ENCODE measurements at regions of chr16 and their contacts with region 1.

Region 1: GRCh38 chr16:8797364-8798173 is at the starts of genes PMM2 and TMEM186:
- DNase-seq: peak; percentile 78 to 96 (median 93)
- ATAC-seq: peak; percentile 99
- H3K4me3 ChIP-seq: peak within 1 kb of the TSS; percentile 90
- H3K4me3 Mint-ChIP-seq: peak within 1 kb of the TSS; percentile 91 to 99 (median 96)
- H3K27ac ChIP-seq: peak within 1 kb of the TSS; percentile 86
- H3K27ac Mint-ChIP-seq: peak within 1 kb of the TSS; percentile 87 to 95 (median 92)
- H3K4me1 ChIP-seq: peaks cover 25 to 32% of the 10 kb centered on the region in 2 donors
- H3K4me1 Mint-ChIP-seq: peaks cover 19 to 71% (median 49%) of the 10 kb centered on the region in 7 donors
- H3K27me3 ChIP-seq: no peaks in the 10 kb centered on the region
- H3K27me3 Mint-ChIP-seq: no peaks in the 10 kb centered on the region
- total RNA-seq, gene PMM2: 32.2 to 52.8 (median 41.7) TPM
- total RNA-seq, gene TMEM186: 3.2 to 16.3 (median 11.3) TPM

Region 2: GRCh38 chr16:8621572-8622314 is 175.8 kb before region 1 on chr16 and contains the start of gene METTL22:
- CTCF ChIA-PET with region 1: no interaction called
- POLR2A ChIA-PET with region 1: interaction called, 3 read pairs
- intact Hi-C with region 1: loop called (anchors 1 kb)
- DNase-seq: peak; percentile 83 to 98 (median 90)
- ATAC-seq: peak; percentile 99
- H3K4me3 ChIP-seq: peak within 1 kb of the TSS; percentile 97
- H3K4me3 Mint-ChIP-seq: peak within 1 kb of the TSS; percentile 93 to 100 (median 95)
- H3K27ac ChIP-seq: peak within 1 kb of the TSS; percentile 92
- H3K27ac Mint-ChIP-seq: peak within 1 kb of the TSS; percentile 75 to 93 (median 87)
- H3K4me1 ChIP-seq: peaks cover 7 to 10% of the 10 kb centered on the region in 2 donors
- H3K4me1 Mint-ChIP-seq: peaks cover 17 to 40% (median 26%) of the 10 kb centered on the region in 7 donors
- H3K27me3 ChIP-seq: no peaks in the 10 kb centered on the region
- H3K27me3 Mint-ChIP-seq: peaks cover 0 to 17% (median 6%) of the 10 kb centered on the region in 5 donors
- total RNA-seq, gene METTL22: 28.9 to 59.4 (median 48.9) TPM

Region 3: GRCh38 chr16:8660841-8661301 is 136.7 kb before region 1 on chr16:
- CTCF ChIA-PET with region 1: no interaction called
- POLR2A ChIA-PET with region 1: no interaction called
- intact Hi-C with region 1: loop called in 1 of 2 experiments (anchors 1 kb)
- DNase-seq: peak in 8 of 9 donors; percentile 11 to 71 (median 28)
- ATAC-seq: peak; percentile 81
- H3K4me3 ChIP-seq: no peak overlapping the region
- H3K4me3 Mint-ChIP-seq: no peak overlapping the region
- H3K27ac ChIP-seq: no peak overlapping the region
- H3K27ac Mint-ChIP-seq: no peak overlapping the region
- H3K4me1 ChIP-seq: no peaks in the 10 kb centered on the region
- H3K4me1 Mint-ChIP-seq: peaks cover 0 to 3% (median 0%) of the 10 kb centered on the region in 7 donors
- H3K27me3 ChIP-seq: no peaks in the 10 kb centered on the region
- H3K27me3 Mint-ChIP-seq: no peaks in the 10 kb centered on the region

Region 4: GRCh38 chr16:8674413-8675022 is 123.1 kb before region 1 on chr16 and contains the start of gene ABAT:
- CTCF ChIA-PET with region 1: no interaction called
- POLR2A ChIA-PET with region 1: no interaction called
- intact Hi-C with region 1: loop called (anchors 1 kb)
- DNase-seq: peak; percentile 83 to 92 (median 87)
- ATAC-seq: peak; percentile 99
- H3K4me3 ChIP-seq: peak within 1 kb of the TSS; percentile 57
- H3K4me3 Mint-ChIP-seq: peak within 1 kb of the TSS; percentile 78 to 93 (median 88)
- H3K27ac ChIP-seq: peak within 1 kb of the TSS; percentile 70
- H3K27ac Mint-ChIP-seq: peak within 1 kb of the TSS; percentile 58 to 91 (median 78)
- H3K4me1 ChIP-seq: peaks cover 9 to 18% of the 10 kb centered on the region in 2 donors
- H3K4me1 Mint-ChIP-seq: peaks cover 6 to 22% (median 19%) of the 10 kb centered on the region in 7 donors
- H3K27me3 ChIP-seq: no peaks in the 10 kb centered on the region
- H3K27me3 Mint-ChIP-seq: peaks cover 0 to 7% (median 0%) of the 10 kb centered on the region in 5 donors
- total RNA-seq, gene ABAT: 5.4 to 11.5 (median 9.3) TPM

Region 5: DNA sequence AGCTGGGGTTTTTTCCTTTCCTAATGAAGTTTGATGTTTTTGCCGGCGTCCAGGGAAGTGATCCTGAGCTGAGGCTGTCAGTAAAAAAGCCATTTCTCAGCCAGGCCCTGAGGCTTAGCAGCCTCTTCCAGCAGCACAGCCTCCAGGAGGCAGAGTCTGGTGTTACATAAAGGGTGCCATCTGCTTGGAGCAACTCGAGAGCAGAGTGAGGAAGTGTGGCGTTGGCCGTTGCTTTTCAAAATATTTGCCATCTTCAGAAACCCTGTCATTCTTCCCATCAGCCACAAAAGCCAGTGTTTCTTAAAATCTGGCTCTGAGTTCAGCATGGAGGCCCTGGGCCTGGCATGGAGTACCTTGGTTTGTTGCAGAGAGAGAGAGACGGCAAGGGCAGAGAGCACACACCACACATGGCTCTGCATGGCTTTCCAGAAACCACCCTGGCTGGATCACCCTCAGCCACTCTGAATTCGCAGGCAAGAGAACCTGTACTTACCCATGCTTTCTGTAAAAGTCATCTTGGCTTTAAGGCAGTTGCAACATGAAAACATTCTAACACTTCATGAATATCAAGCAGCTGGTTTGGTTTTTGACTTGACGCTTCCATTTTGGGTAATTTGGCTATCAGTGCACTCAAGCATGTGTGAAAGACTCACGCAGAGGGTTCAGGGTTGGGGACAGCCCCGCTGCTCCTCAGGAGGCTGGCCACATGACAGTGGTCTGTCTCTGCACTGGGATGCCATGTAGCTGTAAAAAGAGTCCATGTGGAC is 21.1 kb after region 1 on chr16:
- CTCF ChIA-PET with region 1: no interaction called
- POLR2A ChIA-PET with region 1: interaction called, 3 read pairs
- intact Hi-C with region 1: loop called (anchors 1 to 2 kb)
- DNase-seq: no peak
- ATAC-seq: no peak
- H3K4me3 ChIP-seq: no peak overlapping the region
- H3K4me3 Mint-ChIP-seq: peak overlapping the region in 1 of 10 donors; percentile 32
- H3K27ac ChIP-seq: no peak overlapping the region
- H3K27ac Mint-ChIP-seq: peak overlapping the region in 2 of 9 donors; percentile 53 to 81
- H3K4me1 ChIP-seq: peaks cover 0 to 5% of the 10 kb centered on the region in 2 donors
- H3K4me1 Mint-ChIP-seq: peaks cover 16 to 29% (median 23%) of the 10 kb centered on the region in 7 donors
- H3K27me3 ChIP-seq: no peaks in the 10 kb centered on the region
- H3K27me3 Mint-ChIP-seq: no peaks in the 10 kb centered on the region

Region 6: DNA sequence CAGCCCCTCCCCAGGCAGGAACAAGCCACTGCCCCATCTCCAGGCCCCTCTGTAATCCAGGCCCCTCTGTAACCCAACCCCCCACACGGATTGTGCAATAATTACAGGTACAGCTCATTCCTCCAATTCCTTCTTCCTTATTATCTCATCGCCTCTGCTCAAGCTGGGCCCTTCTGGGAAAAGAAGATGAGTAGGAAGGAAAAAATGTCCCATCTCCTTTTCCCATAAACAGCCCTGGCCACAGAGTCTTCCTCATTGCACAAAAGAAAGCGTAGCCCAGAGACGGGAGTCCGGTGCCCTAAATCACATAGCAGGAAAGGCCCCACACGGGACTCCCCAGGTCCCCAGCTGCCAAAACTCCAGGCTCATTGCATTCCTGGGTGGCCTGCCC is 80.9 kb after region 1 on chr16:
- CTCF ChIA-PET with region 1: interaction called, 6 read pairs
- POLR2A ChIA-PET with region 1: interaction called, 3 read pairs
- intact Hi-C with region 1: loop called in 1 of 2 experiments (anchors 1 kb)
- DNase-seq: no peak
- ATAC-seq: no peak
- H3K4me3 ChIP-seq: no peak overlapping the region
- H3K4me3 Mint-ChIP-seq: no peak overlapping the region
- H3K27ac ChIP-seq: no peak overlapping the region
- H3K27ac Mint-ChIP-seq: no peak overlapping the region
- H3K4me1 ChIP-seq: no peaks in the 10 kb centered on the region
- H3K4me1 Mint-ChIP-seq: peaks cover 0 to 23% (median 11%) of the 10 kb centered on the region in 7 donors
- H3K27me3 ChIP-seq: no peaks in the 10 kb centered on the region
- H3K27me3 Mint-ChIP-seq: no peaks in the 10 kb centered on the region

Region 7: DNA sequence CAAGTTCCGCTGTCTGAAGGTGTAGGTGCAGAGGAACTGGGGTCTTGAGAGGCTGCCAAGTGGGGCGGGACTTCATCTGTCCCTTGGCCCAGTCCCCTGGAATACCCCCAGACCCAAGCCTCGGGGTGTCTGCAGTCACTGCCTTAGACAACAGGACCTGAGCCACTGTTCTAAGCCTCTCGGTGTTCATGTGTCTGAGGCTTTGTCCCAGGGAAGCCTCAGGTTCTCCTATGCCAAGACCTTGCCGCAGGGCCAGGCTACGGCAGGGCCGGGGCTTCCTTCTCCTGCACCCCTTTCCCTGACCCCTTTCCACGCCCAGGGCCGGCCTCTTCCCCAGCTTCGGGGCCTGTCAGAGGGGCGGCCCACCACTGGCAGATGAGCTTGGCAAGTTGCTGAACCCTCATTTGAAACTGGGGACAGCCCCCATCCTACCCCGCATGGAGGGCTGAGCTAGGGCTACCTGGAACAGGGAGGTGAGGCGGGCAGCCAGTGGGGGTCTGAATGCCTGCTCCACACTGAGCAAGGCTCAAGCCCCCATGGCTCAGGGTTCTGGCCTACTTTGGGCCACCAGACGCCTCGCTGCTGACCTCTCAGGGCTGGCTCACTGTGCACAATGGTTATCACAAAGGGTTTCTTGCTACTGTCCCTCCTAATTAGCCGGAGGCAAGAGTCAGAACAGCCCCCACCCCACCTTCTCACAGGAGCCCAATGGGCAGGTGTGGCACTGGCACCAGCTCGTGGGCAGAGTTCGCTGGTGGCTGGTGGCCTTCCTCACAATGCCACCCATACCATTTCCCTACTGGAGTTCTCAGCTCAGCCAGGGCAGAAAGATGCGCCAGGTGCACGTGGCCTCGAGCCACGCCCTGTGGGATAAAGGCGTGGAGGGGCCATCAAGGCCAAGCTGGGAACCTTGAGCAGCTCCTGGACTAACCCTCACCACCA is 91.7 kb after region 1 on chr16:
- CTCF ChIA-PET with region 1: no interaction called
- POLR2A ChIA-PET with region 1: no interaction called
- intact Hi-C with region 1: no loop called
- DNase-seq: no peak
- ATAC-seq: no peak
- H3K4me3 ChIP-seq: no peak overlapping the region
- H3K4me3 Mint-ChIP-seq: no peak overlapping the region
- H3K27ac ChIP-seq: no peak overlapping the region
- H3K27ac Mint-ChIP-seq: peak overlapping the region in 1 of 9 donors; percentile 56
- H3K4me1 ChIP-seq: no peaks in the 10 kb centered on the region
- H3K4me1 Mint-ChIP-seq: peaks cover 6 to 9% (median 9%) of the 10 kb centered on the region in 7 donors
- H3K27me3 ChIP-seq: no peaks in the 10 kb centered on the region
- H3K27me3 Mint-ChIP-seq: peaks cover 0 to 10% (median 7%) of the 10 kb centered on the region in 5 donors

Region 8: GRCh38 chr16:9072806-9073341 is 275.3 kb after region 1 on chr16:
- CTCF ChIA-PET with region 1: no interaction called
- POLR2A ChIA-PET with region 1: no interaction called
- intact Hi-C with region 1: loop called in 1 of 2 experiments (anchors 5 kb)
- DNase-seq: no peak
- ATAC-seq: no peak
- H3K4me3 ChIP-seq: no peak overlapping the region
- H3K4me3 Mint-ChIP-seq: peak overlapping the region in 1 of 10 donors; percentile 55
- H3K27ac ChIP-seq: no peak overlapping the region
- H3K27ac Mint-ChIP-seq: peak overlapping the region in 1 of 9 donors; percentile 87
- H3K4me1 ChIP-seq: no peaks in the 10 kb centered on the region
- H3K4me1 Mint-ChIP-seq: peaks cover 4 to 28% (median 9%) of the 10 kb centered on the region in 7 donors
- H3K27me3 ChIP-seq: no peaks in the 10 kb centered on the region
- H3K27me3 Mint-ChIP-seq: peaks cover 0 to 6% (median 5%) of the 10 kb centered on the region in 5 donors

Measured in naive thymus-derived CD4-positive, alpha-beta T cell (primary cell).